A673 (cell line): ENCODE measurements at regions of chr21 and their contacts with region 1.

Region 1: GRCh38 chr21:25400427-25400826 is 206.9 kb downstream of the MRPL39 start:
- DNase-seq: no peak
- H3K4me3 ChIP-seq: no peak overlapping the region
- H3K27ac ChIP-seq: no peak overlapping the region
- H3K4me1 ChIP-seq: no peaks in the 10 kb centered on the region
- H3K27me3 ChIP-seq: no peaks in the 10 kb centered on the region
- CTCF ChIP-seq: no peak

Region 2: DNA sequence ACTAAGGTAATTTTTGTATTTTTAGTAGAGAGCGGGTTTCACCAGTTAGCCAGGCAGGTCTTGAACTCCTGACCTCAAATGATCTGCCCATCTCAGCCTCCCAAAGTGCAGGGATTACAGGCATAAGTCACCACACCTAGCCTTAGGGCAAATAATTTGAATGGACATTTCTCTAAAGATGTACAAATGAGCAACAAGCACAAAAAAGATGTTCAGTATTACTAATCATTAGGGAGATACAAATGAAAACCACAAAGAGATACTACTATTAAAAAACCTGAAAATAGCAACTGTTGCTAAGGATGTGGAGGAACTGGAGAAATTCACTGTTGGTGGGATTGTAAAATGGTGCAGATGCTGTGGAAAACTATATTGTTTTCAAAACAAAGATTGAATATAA is 413.5 kb after region 1 on chr21:
- CTCF ChIA-PET with region 1: no interaction called
- POLR2A ChIA-PET with region 1: interaction called, 10 read pairs
- intact Hi-C with region 1: no loop called
- DNase-seq: no peak
- H3K4me3 ChIP-seq: no peak overlapping the region
- H3K27ac ChIP-seq: no peak overlapping the region
- H3K4me1 ChIP-seq: peaks cover 3% of the 10 kb centered on the region
- H3K27me3 ChIP-seq: no peaks in the 10 kb centered on the region
- CTCF ChIP-seq: no peak